PC-3 (cell line): ENCODE measurements at regions of chr6 and their contacts with region 1.

Region 1: GRCh38 chr6:27893059-27893835 is 18.9 kb downstream of the OR2B2 start:
- DNase-seq: peak; percentile 98
- ATAC-seq: peak; percentile 68
- H3K4me3 ChIP-seq: peak overlapping the region; percentile 83
- H3K27ac ChIP-seq: peak overlapping the region; percentile 85
- H3K4me1 ChIP-seq: peaks cover 10% of the 10 kb centered on the region; the same call in 1 of the 2 replicates
- H3K27me3 ChIP-seq: no peaks in the 10 kb centered on the region
- CTCF ChIP-seq: no peak

Region 2: DNA sequence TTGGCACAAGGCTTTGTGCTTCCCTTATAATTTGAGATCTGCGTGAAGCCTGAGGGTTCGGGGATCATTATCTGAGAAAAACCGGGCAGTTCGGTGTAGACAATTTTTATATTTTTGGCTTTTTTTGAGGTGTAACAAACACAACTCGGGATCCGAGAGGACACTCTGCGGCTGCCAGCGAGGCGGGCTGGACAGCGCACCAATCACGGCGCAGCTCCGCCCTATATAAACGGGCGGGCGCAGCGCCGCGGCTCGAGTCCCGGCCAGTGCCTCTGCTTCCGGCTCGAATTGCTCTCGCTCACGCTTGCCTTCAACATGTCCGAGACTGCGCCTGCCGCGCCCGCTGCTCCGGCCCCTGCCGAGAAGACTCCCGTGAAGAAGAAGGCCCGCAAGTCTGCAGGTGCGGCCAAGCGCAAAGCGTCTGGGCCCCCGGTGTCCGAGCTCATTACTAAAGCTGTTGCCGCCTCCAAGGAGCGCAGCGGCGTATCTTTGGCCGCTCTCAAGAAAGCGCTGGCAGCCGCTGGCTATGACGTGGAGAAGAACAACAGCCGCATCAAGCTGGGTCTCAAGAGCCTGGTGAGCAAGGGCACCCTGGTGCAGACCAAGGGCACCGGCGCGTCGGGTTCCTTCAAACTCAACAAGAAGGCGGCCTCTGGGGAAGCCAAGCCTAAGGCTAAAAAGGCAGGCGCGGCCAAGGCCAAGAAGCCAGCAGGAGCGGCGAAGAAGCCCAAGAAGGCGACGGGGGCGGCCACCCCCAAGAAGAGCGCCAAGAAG is 1737.0 kb before region 1 on chr6:
- CTCF ChIA-PET with region 1: no interaction called
- POLR2A ChIA-PET with region 1: interaction called, 3 read pairs
- intact Hi-C with region 1: loop called (anchors 2 kb)
- DNase-seq: peak; percentile 95
- ATAC-seq: peak; percentile 47
- H3K4me3 ChIP-seq: peak overlapping the region; percentile 90
- H3K27ac ChIP-seq: peak overlapping the region; percentile 79
- H3K4me1 ChIP-seq: peaks cover 25% of the 10 kb centered on the region
- H3K27me3 ChIP-seq: no peaks in the 10 kb centered on the region
- CTCF ChIP-seq: no peak

Region 3: GRCh38 chr6:27809939-27810767 is 83.1 kb before region 1 on chr6:
- CTCF ChIA-PET with region 1: no interaction called
- POLR2A ChIA-PET with region 1: interaction called, 38 read pairs
- intact Hi-C with region 1: no loop called
- DNase-seq: peak; percentile 99
- ATAC-seq: peak; percentile 28
- H3K4me3 ChIP-seq: peak overlapping the region; percentile 76
- H3K27ac ChIP-seq: peak overlapping the region; percentile 65
- H3K4me1 ChIP-seq: peaks cover 28% of the 10 kb centered on the region
- H3K27me3 ChIP-seq: no peaks in the 10 kb centered on the region
- CTCF ChIP-seq: 0 out of 2 replicates have a peak, but pooled peaks have one; percentile 14

Region 4: GRCh38 chr6:27838058-27838944 is 54.9 kb before region 1 on chr6:
- CTCF ChIA-PET with region 1: interaction called, 5 read pairs
- POLR2A ChIA-PET with region 1: interaction called, 101 read pairs
- intact Hi-C with region 1: loop called (anchors 1 kb)
- DNase-seq: peak; percentile 99
- ATAC-seq: peak; percentile 68
- H3K4me3 ChIP-seq: peak overlapping the region; percentile 85
- H3K27ac ChIP-seq: peak overlapping the region; percentile 93
- H3K4me1 ChIP-seq: peaks cover 17% of the 10 kb centered on the region
- H3K27me3 ChIP-seq: no peaks in the 10 kb centered on the region
- CTCF ChIP-seq: no peak

Region 5: DNA sequence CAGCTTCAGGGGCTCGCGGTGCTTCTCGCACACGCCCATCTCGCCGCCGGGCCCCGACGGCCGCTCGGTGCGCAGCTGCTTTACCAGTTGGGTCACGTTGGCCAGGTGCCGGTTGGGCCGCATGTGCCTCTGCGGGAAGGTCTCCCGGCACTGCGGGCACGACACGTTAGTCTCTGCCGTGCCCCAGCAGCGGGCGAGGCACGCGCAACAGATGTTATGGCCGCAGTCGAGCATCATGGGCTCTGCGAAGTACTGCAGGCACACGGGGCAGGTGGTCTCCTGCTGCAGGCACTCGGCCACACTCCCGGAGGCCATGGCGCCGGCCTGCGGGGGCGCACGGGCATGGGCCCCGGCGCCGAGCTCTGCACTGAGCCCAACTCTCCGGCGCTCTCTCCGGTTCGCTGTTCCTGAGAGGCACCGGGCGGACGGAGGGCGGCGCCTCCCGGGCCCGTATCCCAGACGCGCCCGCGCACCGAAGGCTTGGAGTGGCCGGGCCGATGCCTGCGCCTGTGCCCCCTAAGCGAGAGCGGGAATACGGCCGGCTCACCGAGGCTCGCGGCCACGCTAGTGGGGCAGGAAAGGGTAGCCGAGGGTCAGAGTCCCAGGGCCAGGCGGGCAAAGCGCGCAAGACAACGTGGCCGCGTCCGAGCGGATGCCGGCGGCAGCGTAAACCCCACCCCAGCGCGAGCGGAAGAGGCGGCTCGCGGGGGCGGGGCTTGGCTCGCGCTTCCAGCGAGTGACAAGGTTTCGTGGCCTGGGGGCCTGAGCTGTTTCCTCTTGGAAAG is 1030.3 kb after region 1 on chr6 and contains the start of gene TRIM27:
- CTCF ChIA-PET with region 1: no interaction called
- POLR2A ChIA-PET with region 1: interaction called, 18 read pairs
- intact Hi-C with region 1: no loop called
- DNase-seq: peak; percentile 95
- ATAC-seq: peak; percentile 72
- H3K4me3 ChIP-seq: peak within 1 kb of the TSS; percentile 86
- H3K27ac ChIP-seq: peak within 1 kb of the TSS; percentile 82
- H3K4me1 ChIP-seq: peaks cover 23% of the 10 kb centered on the region
- H3K27me3 ChIP-seq: no peaks in the 10 kb centered on the region
- CTCF ChIP-seq: no peak
- total RNA-seq, gene TRIM27: 85.8 and 92.5 TPM in 2 replicates